PC-3 (cell line): ENCODE measurements at regions of chr17 and their contacts with region 1.

Region 1: DNA sequence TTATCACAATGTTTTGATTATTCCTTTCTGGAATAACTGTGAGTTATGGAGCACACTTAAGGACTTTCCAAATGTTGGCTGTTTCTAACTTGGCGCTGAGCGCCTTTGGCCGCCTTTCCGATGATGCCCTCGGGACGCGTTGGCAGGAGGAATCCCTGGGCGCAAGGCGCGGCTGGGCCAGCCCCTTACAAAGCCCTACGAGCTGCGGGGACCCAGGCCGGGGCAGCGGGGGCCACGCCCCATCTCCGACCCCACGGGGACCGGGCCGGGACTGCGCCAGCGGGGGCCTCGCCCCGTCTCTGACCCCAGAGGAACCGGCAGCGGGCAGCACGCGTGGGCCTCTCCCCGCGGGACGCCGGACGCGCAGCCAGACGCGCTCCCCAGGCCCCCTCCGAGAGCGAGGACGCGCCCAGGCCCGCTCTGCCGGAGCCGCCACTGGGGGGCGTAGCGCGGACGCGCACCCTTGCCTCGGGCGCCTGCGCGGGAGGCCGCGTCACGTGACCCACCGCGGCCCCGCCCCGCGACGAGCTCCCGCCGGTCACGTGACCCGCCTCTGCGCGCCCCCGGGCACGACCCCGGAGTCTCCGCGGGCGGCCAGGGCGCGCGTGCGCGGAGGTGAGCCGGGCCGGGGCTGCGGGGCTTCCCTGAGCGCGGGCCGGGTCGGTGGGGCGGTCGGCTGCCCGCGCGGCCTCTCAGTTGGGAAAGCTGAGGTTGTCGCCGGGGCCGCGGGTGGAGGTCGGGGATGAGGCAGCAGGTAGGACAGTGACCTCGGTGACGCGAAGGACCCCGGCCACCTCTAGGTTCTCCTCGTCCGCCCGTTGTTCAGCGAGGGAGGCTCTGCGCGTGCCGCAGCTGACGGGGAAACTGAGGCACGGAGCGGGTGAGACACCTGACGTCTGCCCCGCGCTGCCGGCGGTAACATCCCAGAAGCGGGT is at the start of gene GAA:
- DNase-seq: peak; percentile 94
- ATAC-seq: peak; percentile 88
- H3K4me3 ChIP-seq: peak within 1 kb of the TSS; percentile 96
- H3K27ac ChIP-seq: no peak within 1 kb of the TSS
- H3K4me1 ChIP-seq: peaks cover 18% of the 10 kb centered on the region
- H3K27me3 ChIP-seq: no peaks in the 10 kb centered on the region
- CTCF ChIP-seq: peak; percentile 74
- total RNA-seq, gene GAA: 76.2 and 126 TPM in 2 replicates

Region 2: GRCh38 chr17:80124351-80124981 is 23.2 kb after region 1 on chr17:
- CTCF ChIA-PET with region 1: interaction called, 10 read pairs
- POLR2A ChIA-PET with region 1: interaction called, 3 read pairs
- intact Hi-C with region 1: no loop called
- DNase-seq: peak; percentile 28
- ATAC-seq: peak; percentile 39
- H3K4me3 ChIP-seq: no peak overlapping the region
- H3K27ac ChIP-seq: no peak overlapping the region
- H3K4me1 ChIP-seq: peaks cover 10% of the 10 kb centered on the region
- H3K27me3 ChIP-seq: no peaks in the 10 kb centered on the region
- CTCF ChIP-seq: peak; percentile 55

Region 3: DNA sequence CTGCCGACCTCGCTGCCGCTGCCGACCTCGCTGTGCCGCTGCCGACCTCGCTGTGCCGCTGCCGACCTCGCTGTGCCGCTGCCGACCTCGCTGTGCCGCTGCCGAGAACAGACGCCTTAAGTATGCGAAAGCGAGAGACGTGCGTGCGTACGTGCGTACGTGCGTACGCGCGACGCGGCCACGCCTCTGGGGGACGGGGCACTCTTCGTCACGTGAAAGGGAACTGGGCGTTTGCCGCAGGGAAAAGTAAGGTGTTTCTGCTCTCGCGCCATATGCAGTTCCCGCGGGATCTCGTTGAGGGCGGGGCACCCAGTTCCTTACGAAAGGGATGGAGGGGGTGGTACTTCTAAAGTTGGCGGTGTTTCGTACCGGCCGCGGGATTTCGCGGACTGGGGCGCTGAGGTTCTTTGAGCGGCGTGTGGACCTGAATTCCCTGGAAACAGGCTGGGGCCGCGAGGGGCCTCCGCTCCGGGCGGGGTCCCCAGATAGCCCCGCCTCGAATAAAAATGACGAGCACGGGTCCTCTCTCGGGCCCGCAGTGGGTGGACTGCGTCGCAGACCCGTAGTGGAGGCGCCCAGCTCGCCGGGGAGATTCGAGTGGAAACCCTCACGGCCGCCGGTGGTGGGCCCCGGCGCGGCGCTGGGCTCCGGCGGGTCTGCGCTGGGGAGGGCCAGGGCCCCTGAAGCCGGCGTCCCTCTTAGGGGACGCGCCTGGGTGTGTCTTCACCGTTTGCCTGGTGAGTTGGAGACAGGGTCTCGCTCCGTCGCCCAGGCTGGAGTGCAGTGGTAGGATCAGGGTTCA is 46.0 kb after region 1 on chr17 and contains the start of gene EIF4A3:
- CTCF ChIA-PET with region 1: interaction called, 7 read pairs
- POLR2A ChIA-PET with region 1: interaction called, 6 read pairs
- intact Hi-C with region 1: loop called (anchors 2 kb)
- DNase-seq: peak; percentile 100
- ATAC-seq: peak; percentile 91
- H3K4me3 ChIP-seq: peak within 1 kb of the TSS; percentile 91
- H3K27ac ChIP-seq: peak within 1 kb of the TSS; percentile 62
- H3K4me1 ChIP-seq: peaks cover 12% of the 10 kb centered on the region
- H3K27me3 ChIP-seq: no peaks in the 10 kb centered on the region
- CTCF ChIP-seq: no peak
- total RNA-seq, gene EIF4A3: 167 and 185 TPM in 2 replicates